CD14-positive monocyte (primary cell): ENCODE measurements at regions of chr18 and their contacts with region 1.

Region 1: GRCh38 chr18:79790996-79791972 is 6.5 kb upstream of the KCNG2 start:
- DNase-seq: peak; percentile 79 to 86 (median 85)
- H3K4me3 ChIP-seq: peak overlapping the region; percentile 7 to 68 (median 9)
- H3K4me3 Mint-ChIP-seq: peak overlapping the region; percentile 75 to 94
- H3K27ac ChIP-seq: peak overlapping the region; percentile 38 to 76
- H3K27ac Mint-ChIP-seq: peak overlapping the region; percentile 67 to 94 (median 88)
- H3K4me1 ChIP-seq: peaks cover 63 to 96% of the 10 kb centered on the region in 2 donors
- H3K4me1 Mint-ChIP-seq: peaks cover 85% of the 10 kb centered on the region
- H3K27me3 ChIP-seq: peaks cover 10 to 38% of the 10 kb centered on the region in 2 donors
- H3K27me3 Mint-ChIP-seq: peaks cover 32 to 51% (median 46%) of the 10 kb centered on the region in 3 donors
- CTCF ChIP-seq: no peak

Region 2: GRCh38 chr18:79720355-79720733 is 70.9 kb before region 1 on chr18:
- intact Hi-C with region 1: no loop called
- DNase-seq: peak in 1 of 3 donors; percentile 14
- H3K4me3 ChIP-seq: no peak overlapping the region
- H3K4me3 Mint-ChIP-seq: no peak overlapping the region
- H3K27ac ChIP-seq: no peak overlapping the region
- H3K27ac Mint-ChIP-seq: peak overlapping the region in 4 of 7 donors; percentile 25 to 75 (median 58)
- H3K4me1 ChIP-seq: no peaks in the 10 kb centered on the region
- H3K4me1 Mint-ChIP-seq: no peaks in the 10 kb centered on the region
- H3K27me3 ChIP-seq: no peaks in the 10 kb centered on the region
- H3K27me3 Mint-ChIP-seq: no peaks in the 10 kb centered on the region
- CTCF ChIP-seq: no peak

Region 3: GRCh38 chr18:79988451-79989194 is 197.3 kb after region 1 on chr18 and contains the start of gene TXNL4A:
- intact Hi-C with region 1: loop called in 1 of 2 experiments (anchors 10 kb)
- DNase-seq: peak; percentile 77 to 88 (median 87)
- H3K4me3 ChIP-seq: peak within 1 kb of the TSS; percentile 61 to 96 (median 79)
- H3K4me3 Mint-ChIP-seq: peak within 1 kb of the TSS; percentile 93 to 98
- H3K27ac ChIP-seq: peak within 1 kb of the TSS; percentile 75 to 95
- H3K27ac Mint-ChIP-seq: peak within 1 kb of the TSS; percentile 92 to 98 (median 97)
- H3K4me1 ChIP-seq: peaks cover 21 to 27% of the 10 kb centered on the region in 2 donors
- H3K4me1 Mint-ChIP-seq: peaks cover 24% of the 10 kb centered on the region
- H3K27me3 ChIP-seq: no peaks in the 10 kb centered on the region
- H3K27me3 Mint-ChIP-seq: peaks cover 0 to 2% (median 0%) of the 10 kb centered on the region in 3 donors
- CTCF ChIP-seq: no peak
- polyA plus RNA-seq, gene TXNL4A: 34.5 to 192 (median 150) TPM